Gastrocnemius medialis (tissue), 4 donors: ENCODE measurements at regions of chr7 and their contacts with region 1.

Region 1: GRCh38 chr7:120842121-120842621 is 15.8 kb downstream of the TSPAN12 start:
- DNase-seq: no peak
- ATAC-seq: no peak
- H3K4me3 ChIP-seq: no peak overlapping the region
- H3K27ac ChIP-seq: no peak overlapping the region
- H3K4me1 ChIP-seq: no peaks in the 10 kb centered on the region
- H3K27me3 ChIP-seq: no peaks in the 10 kb centered on the region
- CTCF ChIP-seq: no peak
- POLR2A ChIP-seq: no peak

Region 2: DNA sequence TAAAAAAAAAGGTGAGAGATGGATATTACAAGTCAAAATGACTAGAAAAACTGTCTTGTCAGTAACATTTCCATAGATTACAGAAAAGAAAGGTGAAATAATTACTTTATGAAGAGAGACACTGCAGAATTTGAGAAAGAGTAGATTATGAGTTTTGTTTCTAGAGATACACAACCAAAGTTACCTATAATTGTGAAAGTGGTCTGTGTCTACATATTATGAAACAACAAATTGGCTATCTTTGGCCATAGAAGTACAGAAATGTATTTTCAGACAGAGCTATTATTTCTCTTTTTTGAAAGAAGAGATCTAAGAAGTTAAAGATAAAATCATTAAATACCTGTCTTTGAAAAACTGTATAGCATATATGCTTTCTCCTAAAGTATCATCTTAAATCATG is 539.1 kb before region 1 on chr7:
- in situ Hi-C with region 1: no loop called
- intact Hi-C with region 1: no loop called
- DNase-seq: no peak
- ATAC-seq: no peak
- H3K4me3 ChIP-seq: no peak overlapping the region
- H3K27ac ChIP-seq: no peak overlapping the region
- H3K4me1 ChIP-seq: no peaks in the 10 kb centered on the region
- H3K27me3 ChIP-seq: no peaks in the 10 kb centered on the region
- CTCF ChIP-seq: no peak
- POLR2A ChIP-seq: no peak

Region 3: GRCh38 chr7:120740348-120740747 is 101.8 kb before region 1 on chr7:
- in situ Hi-C with region 1: no loop called
- intact Hi-C with region 1: no loop called
- DNase-seq: no peak
- ATAC-seq: peak in 1 of 2 donors; percentile 21
- H3K4me3 ChIP-seq: peak overlapping the region; percentile 32 to 37 (median 34)
- H3K27ac ChIP-seq: no peak overlapping the region
- H3K4me1 ChIP-seq: peaks cover 9 to 18% of the 10 kb centered on the region in 2 donors
- H3K27me3 ChIP-seq: no peaks in the 10 kb centered on the region
- CTCF ChIP-seq: no peak
- POLR2A ChIP-seq: no peak

Region 4: GRCh38 chr7:120819863-120820262 is 22.3 kb before region 1 on chr7:
- in situ Hi-C with region 1: no loop called
- intact Hi-C with region 1: loop called (anchors 1 kb)
- DNase-seq: no peak
- ATAC-seq: no peak
- H3K4me3 ChIP-seq: no peak overlapping the region
- H3K27ac ChIP-seq: no peak overlapping the region
- H3K4me1 ChIP-seq: no peaks in the 10 kb centered on the region
- H3K27me3 ChIP-seq: no peaks in the 10 kb centered on the region
- CTCF ChIP-seq: no peak
- POLR2A ChIP-seq: no peak